PC-3 (cell line): ENCODE measurements at regions of chr1 and their contacts with region 1.

Region 1: DNA sequence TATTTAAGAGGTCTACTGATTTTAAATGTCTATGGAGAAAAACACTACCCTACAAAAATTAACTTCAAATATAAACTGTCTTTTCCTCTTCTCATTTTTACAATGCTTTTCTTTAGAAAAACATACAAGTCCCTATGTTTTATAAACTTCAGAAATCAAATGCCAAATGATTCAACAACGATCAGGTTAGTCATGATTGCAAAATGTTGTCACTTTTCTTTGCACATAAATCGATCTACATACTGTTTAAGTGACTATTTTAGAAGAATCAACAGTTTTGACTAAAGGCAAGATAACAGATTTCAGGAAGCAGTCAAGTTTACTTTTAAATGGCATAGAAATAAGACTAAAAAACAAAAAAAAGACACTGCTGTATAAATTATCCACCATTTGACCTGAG is 168.7 kb downstream of the GPATCH2 start:
- DNase-seq: peak; percentile 39
- ATAC-seq: peak; percentile 43
- H3K4me3 ChIP-seq: no peak overlapping the region
- H3K27ac ChIP-seq: no peak overlapping the region
- H3K4me1 ChIP-seq: peaks cover 10% of the 10 kb centered on the region
- H3K27me3 ChIP-seq: no peaks in the 10 kb centered on the region
- CTCF ChIP-seq: no peak

Region 2: DNA sequence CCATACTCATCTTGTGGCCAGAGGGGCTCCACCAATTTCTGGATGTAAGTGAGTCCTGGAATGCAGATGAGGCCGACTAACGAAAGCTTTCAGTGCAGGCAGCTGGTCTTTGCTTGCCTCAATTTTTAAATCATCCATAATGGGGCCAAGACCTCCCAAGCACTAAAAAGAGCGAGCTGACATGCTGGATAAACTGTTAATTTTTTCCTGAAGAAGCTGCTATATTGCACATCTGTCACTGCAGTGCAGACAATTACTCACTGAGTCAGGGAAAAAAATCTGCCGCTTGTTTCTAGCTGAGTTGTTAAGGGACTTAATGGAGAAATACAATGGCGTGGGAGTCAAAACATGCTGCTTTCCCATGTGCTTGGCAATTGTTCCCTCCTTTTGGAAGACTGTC is 36.7 kb before region 1 on chr1:
- CTCF ChIA-PET with region 1: no interaction called
- POLR2A ChIA-PET with region 1: no interaction called
- intact Hi-C with region 1: loop called (anchors 2 kb)
- DNase-seq: no peak
- ATAC-seq: no peak
- H3K4me3 ChIP-seq: no peak overlapping the region
- H3K27ac ChIP-seq: no peak overlapping the region
- H3K4me1 ChIP-seq: peaks cover 9% of the 10 kb centered on the region; the same call in 1 of the 2 replicates
- H3K27me3 ChIP-seq: no peaks in the 10 kb centered on the region
- CTCF ChIP-seq: no peak

Region 3: GRCh38 chr1:217437375-217437774 is 24.8 kb before region 1 on chr1:
- CTCF ChIA-PET with region 1: no interaction called
- POLR2A ChIA-PET with region 1: no interaction called
- intact Hi-C with region 1: no loop called
- DNase-seq: no peak
- ATAC-seq: no peak
- H3K4me3 ChIP-seq: no peak overlapping the region
- H3K27ac ChIP-seq: no peak overlapping the region
- H3K4me1 ChIP-seq: no peaks in the 10 kb centered on the region
- H3K27me3 ChIP-seq: no peaks in the 10 kb centered on the region
- CTCF ChIP-seq: no peak

Region 4: DNA sequence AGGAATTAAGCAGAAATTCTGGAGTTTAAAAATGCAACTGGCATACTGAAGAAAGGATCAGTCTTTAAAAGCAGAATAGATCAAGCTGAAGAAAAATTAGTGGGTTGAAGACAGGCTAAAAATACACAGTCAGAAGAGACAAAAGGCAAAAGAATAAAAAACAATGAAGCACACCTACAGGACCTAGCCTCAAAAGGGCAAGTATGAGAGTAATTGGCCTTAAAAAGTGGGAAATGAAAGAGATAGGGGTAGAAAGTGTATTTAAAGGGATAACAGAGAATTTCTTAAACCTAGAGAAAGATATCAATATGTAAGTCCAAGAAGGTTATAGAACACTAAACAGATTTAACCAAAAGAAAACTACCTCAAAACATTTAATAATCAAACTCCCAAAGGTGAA is 16.3 kb after region 1 on chr1:
- CTCF ChIA-PET with region 1: no interaction called
- POLR2A ChIA-PET with region 1: no interaction called
- intact Hi-C with region 1: loop called (anchors 2 kb)
- DNase-seq: no peak
- ATAC-seq: no peak
- H3K4me3 ChIP-seq: no peak overlapping the region
- H3K27ac ChIP-seq: no peak overlapping the region
- H3K4me1 ChIP-seq: peaks cover 5% of the 10 kb centered on the region
- H3K27me3 ChIP-seq: no peaks in the 10 kb centered on the region
- CTCF ChIP-seq: no peak